Esophagus muscularis mucosa (tissue), 4 donors: ENCODE measurements at regions of chr15 and their contacts with region 1.

Region 1: DNA sequence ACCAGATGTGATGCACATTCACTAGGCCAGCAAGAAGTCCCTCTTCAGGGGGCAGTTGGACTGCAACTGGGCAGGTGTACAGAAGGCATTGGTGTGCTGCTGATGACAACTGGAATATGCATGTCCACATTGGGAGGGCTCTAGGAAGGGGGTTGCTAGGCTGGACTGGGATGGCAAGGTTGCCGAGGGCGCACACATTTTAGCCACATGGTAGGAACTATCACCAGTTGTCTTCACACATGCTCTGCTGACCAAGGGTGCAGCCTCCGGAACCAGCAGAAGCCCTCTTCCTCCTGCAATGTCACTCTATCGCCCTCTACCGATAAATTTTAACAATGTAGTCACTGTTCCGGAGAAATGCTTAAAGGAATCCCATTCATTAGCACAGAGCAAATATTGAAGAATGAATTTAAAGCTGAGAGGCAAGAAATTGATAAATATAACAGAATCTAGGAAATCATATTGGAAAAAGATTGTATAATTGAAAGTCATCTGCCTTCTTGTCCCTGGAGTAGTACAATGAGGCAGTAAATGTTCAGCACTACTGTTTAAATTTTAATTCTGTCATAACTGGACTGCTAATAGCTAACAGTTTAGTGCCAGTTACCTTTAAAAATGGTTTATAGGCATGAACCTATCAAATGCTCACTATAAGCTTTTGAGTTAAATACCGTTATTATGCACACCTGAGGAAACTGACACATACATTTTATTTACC is 22.6 kb upstream of the LYSMD4 start:
- DNase-seq: no peak
- H3K4me3 ChIP-seq: no peak overlapping the region
- H3K27ac ChIP-seq: no peak overlapping the region
- H3K4me1 ChIP-seq: peaks cover 0 to 5% (median 3%) of the 10 kb centered on the region in 4 donors
- H3K27me3 ChIP-seq: no peaks in the 10 kb centered on the region
- CTCF ChIP-seq: peak; percentile 76 to 87 (median 76)
- EP300 ChIP-seq: no peak
- POLR2A ChIP-seq: no peak

Region 2: GRCh38 chr15:99273801-99274200 is 482.1 kb before region 1 on chr15:
- intact Hi-C with region 1: loop called (anchors 5 kb)
- DNase-seq: no peak
- H3K4me3 ChIP-seq: no peak overlapping the region
- H3K27ac ChIP-seq: no peak overlapping the region
- H3K4me1 ChIP-seq: no peaks in the 10 kb centered on the region
- H3K27me3 ChIP-seq: no peaks in the 10 kb centered on the region
- CTCF ChIP-seq: no peak
- EP300 ChIP-seq: no peak
- POLR2A ChIP-seq: no peak

Region 3: GRCh38 chr15:99845009-99845408 is 89.2 kb after region 1 on chr15:
- intact Hi-C with region 1: no loop called
- DNase-seq: no peak
- H3K4me3 ChIP-seq: no peak overlapping the region
- H3K27ac ChIP-seq: no peak overlapping the region
- H3K4me1 ChIP-seq: no peaks in the 10 kb centered on the region
- H3K27me3 ChIP-seq: no peaks in the 10 kb centered on the region
- CTCF ChIP-seq: no peak
- EP300 ChIP-seq: no peak
- POLR2A ChIP-seq: no peak